ENCODE measurements at regions of chr5 and their contacts with region 1.

Region 1: DNA sequence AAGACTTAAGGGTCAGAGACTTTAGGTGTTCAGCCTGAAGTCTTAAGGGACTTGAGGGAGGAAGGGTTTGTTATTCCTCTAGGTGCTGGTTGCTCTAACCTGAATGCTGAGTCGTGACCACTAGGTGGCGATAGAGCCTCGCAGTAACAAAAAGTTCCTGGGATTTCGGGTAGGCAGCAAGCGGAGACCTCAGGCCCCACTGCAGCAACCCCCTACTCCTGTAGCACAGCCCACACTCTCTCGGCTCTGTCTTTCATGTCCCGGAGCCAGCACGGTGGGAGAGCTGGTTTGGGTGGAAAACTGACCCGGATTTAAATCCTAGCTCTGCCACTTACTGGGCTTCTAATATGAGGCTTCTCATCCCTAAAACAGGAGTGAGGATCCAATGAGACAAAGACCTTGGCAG is 100.3 kb upstream of the PANK3 start:
- DNase-seq: peak; percentile 69 to 71
- ATAC-seq: peak; percentile 77 to 91; a peak in 5 of 6 replicates
- H3K4me3 ChIP-seq: no peak overlapping the region
- H3K27ac ChIP-seq: no peak overlapping the region
- H3K4me1 ChIP-seq: no peaks in the 10 kb centered on the region
- CTCF ChIP-seq: peak; percentile 91
- EP300 ChIP-seq: no peak
- POLR2A ChIP-seq: no peak
- RAD21 ChIP-seq: peak; percentile 89 to 93

Region 2: GRCh38 chr5:168502563-168503237 is 176.8 kb before region 1 on chr5:
- CTCF ChIA-PET with region 1: no interaction called
- POLR2A ChIA-PET with region 1: no interaction called
- DNase-seq: no peak
- ATAC-seq: no peak
- H3K4me3 ChIP-seq: no peak overlapping the region
- H3K27ac ChIP-seq: no peak overlapping the region
- H3K4me1 ChIP-seq: no peaks in the 10 kb centered on the region
- CTCF ChIP-seq: no peak
- EP300 ChIP-seq: no peak
- POLR2A ChIP-seq: no peak
- RAD21 ChIP-seq: no peak

Region 3: DNA sequence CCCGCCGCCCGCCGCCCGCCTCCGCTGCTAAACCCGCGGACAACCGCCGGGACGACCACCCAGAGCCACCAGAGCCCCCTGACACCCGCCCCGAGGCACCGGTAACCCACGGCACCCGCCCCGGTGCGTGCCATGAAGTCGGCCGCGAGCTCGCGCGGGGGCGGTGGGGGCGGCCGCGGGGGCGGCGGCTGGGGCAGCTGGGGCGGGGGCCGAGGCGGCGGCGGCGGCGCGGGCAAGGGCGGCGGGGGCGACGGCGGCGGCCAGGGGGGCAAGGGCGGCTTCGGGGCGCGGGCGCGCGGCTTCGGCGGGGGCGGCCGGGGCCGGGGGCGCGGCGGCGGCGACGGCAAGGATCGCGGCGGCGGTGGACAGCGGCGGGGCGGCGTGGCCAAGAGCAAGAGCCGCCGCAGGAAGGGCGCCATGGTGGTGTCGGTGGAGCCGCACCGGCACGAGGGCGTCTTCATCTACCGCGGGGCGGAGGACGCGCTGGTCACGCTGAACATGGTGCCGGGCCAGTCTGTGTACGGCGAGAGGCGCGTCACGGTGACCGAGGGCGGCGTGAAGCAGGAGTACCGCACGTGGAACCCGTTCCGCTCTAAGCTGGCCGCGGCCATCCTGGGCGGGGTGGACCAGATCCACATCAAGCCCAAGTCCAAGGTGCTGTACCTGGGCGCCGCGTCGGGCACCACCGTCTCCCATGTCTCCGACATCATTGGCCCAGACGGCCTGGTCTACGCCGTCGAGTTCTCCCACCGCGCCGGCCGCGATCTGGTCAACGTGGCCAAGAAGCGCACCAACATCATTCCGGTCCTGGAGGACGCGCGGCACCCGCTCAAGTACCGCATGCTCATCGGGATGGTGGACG is 149.9 kb before region 1 on chr5:
- CTCF ChIA-PET with region 1: no interaction called
- POLR2A ChIA-PET with region 1: no interaction called
- DNase-seq: no peak
- ATAC-seq: no peak
- H3K4me3 ChIP-seq: peak overlapping the region; percentile 40
- H3K27ac ChIP-seq: peak overlapping the region in 1 of 2 experiments; percentile 44; a peak in 2 of 6 replicates
- H3K4me1 ChIP-seq: no peaks in the 10 kb centered on the region
- CTCF ChIP-seq: no peak
- EP300 ChIP-seq: no peak
- POLR2A ChIP-seq: no peak
- RAD21 ChIP-seq: no peak

Region 4: GRCh38 chr5:168642019-168642418 is 37.5 kb before region 1 on chr5:
- CTCF ChIA-PET with region 1: no interaction called
- POLR2A ChIA-PET with region 1: no interaction called
- DNase-seq: no peak
- ATAC-seq: no peak
- H3K4me3 ChIP-seq: no peak overlapping the region
- H3K27ac ChIP-seq: no peak overlapping the region
- H3K4me1 ChIP-seq: peaks cover 3% of the 10 kb centered on the region; the same call in 1 of the 3 replicates
- CTCF ChIP-seq: no peak
- EP300 ChIP-seq: no peak
- POLR2A ChIP-seq: no peak
- RAD21 ChIP-seq: no peak

Region 5: GRCh38 chr5:168654211-168654721 is 25.3 kb before region 1 on chr5:
- CTCF ChIA-PET with region 1: interaction called, 15 read pairs
- POLR2A ChIA-PET with region 1: no interaction called
- DNase-seq: no peak
- ATAC-seq: no peak
- H3K4me3 ChIP-seq: no peak overlapping the region
- H3K27ac ChIP-seq: no peak overlapping the region
- H3K4me1 ChIP-seq: peaks cover 12% of the 10 kb centered on the region; the same call in 2 of the 3 replicates
- CTCF ChIP-seq: no peak
- EP300 ChIP-seq: no peak
- POLR2A ChIP-seq: no peak
- RAD21 ChIP-seq: no peak

Region 6: GRCh38 chr5:168663276-168664004 is 16.1 kb before region 1 on chr5:
- CTCF ChIA-PET with region 1: interaction called, 19 read pairs
- POLR2A ChIA-PET with region 1: no interaction called
- DNase-seq: no peak
- ATAC-seq: no peak
- H3K4me3 ChIP-seq: no peak overlapping the region
- H3K27ac ChIP-seq: no peak overlapping the region
- H3K4me1 ChIP-seq: no peaks in the 10 kb centered on the region
- CTCF ChIP-seq: no peak
- EP300 ChIP-seq: no peak
- POLR2A ChIP-seq: no peak
- RAD21 ChIP-seq: no peak

Region 7: DNA sequence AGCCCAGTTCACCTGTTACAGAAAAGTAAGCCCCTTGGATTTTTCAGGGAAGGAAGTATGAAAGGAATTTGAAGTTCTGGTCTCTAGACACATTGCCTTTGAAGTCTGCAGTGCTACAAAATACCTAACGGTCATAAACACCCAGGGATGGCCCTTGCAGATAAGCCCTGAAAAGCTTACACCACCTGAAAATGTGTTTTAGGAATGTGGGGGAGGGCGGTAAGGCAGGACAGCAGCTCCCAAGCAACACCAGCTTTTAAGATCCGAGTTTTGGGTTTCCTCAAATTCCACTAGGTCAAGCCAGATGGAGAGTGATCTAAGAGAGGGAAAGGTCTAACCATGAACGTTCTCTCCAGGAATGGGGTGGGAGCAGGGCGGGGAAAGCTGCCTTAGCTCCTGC is 13.8 kb after region 1 on chr5:
- CTCF ChIA-PET with region 1: interaction called, 15 read pairs
- POLR2A ChIA-PET with region 1: no interaction called
- DNase-seq: no peak
- ATAC-seq: no peak
- H3K4me3 ChIP-seq: no peak overlapping the region
- H3K27ac ChIP-seq: no peak overlapping the region
- H3K4me1 ChIP-seq: no peaks in the 10 kb centered on the region
- CTCF ChIP-seq: no peak
- EP300 ChIP-seq: no peak
- POLR2A ChIP-seq: no peak
- RAD21 ChIP-seq: no peak

Region 8: DNA sequence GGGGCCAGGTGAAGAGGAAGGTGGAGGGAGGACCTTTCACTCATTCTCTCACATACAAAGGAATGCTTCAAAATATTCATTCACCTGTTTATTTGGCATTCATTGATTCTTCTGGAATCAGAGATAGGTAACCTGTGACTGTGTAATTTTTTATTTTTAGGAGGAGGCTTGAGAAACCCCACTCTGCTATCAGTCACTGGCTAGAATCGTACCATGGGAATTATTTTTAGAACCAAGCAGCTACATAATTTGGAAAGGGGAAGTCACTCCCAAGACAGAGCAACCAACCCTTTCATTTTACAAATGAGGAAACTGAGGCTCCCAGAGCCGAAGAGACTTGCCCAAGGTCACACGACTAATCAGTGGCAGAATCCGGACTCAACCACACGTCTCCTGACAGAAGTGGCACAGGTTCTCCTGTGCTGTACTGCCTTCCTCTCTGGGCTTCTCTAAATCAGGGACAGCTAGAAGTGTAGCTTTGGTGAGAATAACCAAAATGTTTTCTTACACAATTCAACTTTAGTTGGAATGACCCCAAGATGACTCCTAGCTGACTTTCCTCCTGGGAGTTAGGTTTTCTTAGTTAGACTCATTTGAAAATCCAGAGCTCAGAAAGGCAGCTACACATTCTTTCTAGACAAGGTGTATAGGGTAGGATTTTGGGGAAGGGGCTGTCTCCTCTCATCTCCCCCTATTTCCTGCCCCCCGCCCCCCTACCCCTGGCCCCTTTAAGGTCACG is 163.9 kb after region 1 on chr5:
- CTCF ChIA-PET with region 1: no interaction called
- POLR2A ChIA-PET with region 1: no interaction called
- DNase-seq: no peak
- ATAC-seq: no peak
- H3K4me3 ChIP-seq: no peak overlapping the region
- H3K27ac ChIP-seq: no peak overlapping the region
- H3K4me1 ChIP-seq: no peaks in the 10 kb centered on the region
- CTCF ChIP-seq: no peak
- EP300 ChIP-seq: no peak
- POLR2A ChIP-seq: no peak
- RAD21 ChIP-seq: no peak

Measured in A549 (cell line).